Endothelial cell of umbilical vein (primary cell): ENCODE measurements at regions of chr17 and their contacts with region 1.

Region 1: GRCh38 chr17:7435221-7435675 is at the start of gene TMEM102:
- DNase-seq: peak; percentile 97
- H3K4me3 ChIP-seq: peak within 1 kb of the TSS; percentile 54 to 83 (median 83)
- H3K27ac ChIP-seq: peak within 1 kb of the TSS; percentile 32
- H3K4me1 ChIP-seq: peaks cover 21% of the 10 kb centered on the region
- H3K27me3 ChIP-seq: peaks cover 18 to 21% of the 10 kb centered on the region in 2 experiments
- CTCF ChIP-seq: no peak
- POLR2A ChIP-seq: no peak
- total RNA-seq, gene TMEM102: 6.1 and 6.5 TPM in 2 replicates

Region 2: GRCh38 chr17:7306911-7307686 is 128.1 kb before region 1 on chr17 and contains the start of gene EIF5A:
- CTCF ChIA-PET with region 1: no interaction called
- POLR2A ChIA-PET with region 1: no interaction called
- dilution Hi-C with region 1: no loop called
- intact Hi-C with region 1: loop called (anchors 1 kb)
- DNase-seq: peak; percentile 100
- H3K4me3 ChIP-seq: peak within 1 kb of the TSS; percentile 71 to 93 (median 87)
- H3K27ac ChIP-seq: peak within 1 kb of the TSS; percentile 83
- H3K4me1 ChIP-seq: peaks cover 12% of the 10 kb centered on the region
- H3K27me3 ChIP-seq: no peaks in the 10 kb centered on the region
- CTCF ChIP-seq: no peak
- POLR2A ChIP-seq: peak; percentile 83
- total RNA-seq, gene EIF5A: 847 and 859 TPM in 2 replicates

Region 3: GRCh38 chr17:7394452-7395191 is 40.6 kb before region 1 on chr17 and contains the start of gene PLSCR3:
- CTCF ChIA-PET with region 1: interaction called, 7 read pairs
- POLR2A ChIA-PET with region 1: no interaction called
- dilution Hi-C with region 1: no loop called
- intact Hi-C with region 1: loop called (anchors 2 kb)
- DNase-seq: peak; percentile 92
- H3K4me3 ChIP-seq: peak within 1 kb of the TSS; percentile 58 to 93 (median 92)
- H3K27ac ChIP-seq: peak within 1 kb of the TSS; percentile 45
- H3K4me1 ChIP-seq: peaks cover 16% of the 10 kb centered on the region
- H3K27me3 ChIP-seq: no peaks in the 10 kb centered on the region
- CTCF ChIP-seq: peak in 1 of 2 donors; percentile 55
- POLR2A ChIP-seq: peak; percentile 90
- total RNA-seq, gene PLSCR3: 54.5 and 59.9 TPM in 2 replicates

Region 4: GRCh38 chr17:7454980-7455379 is 19.7 kb after region 1 on chr17:
- CTCF ChIA-PET with region 1: interaction called, 12 read pairs
- POLR2A ChIA-PET with region 1: interaction called, 10 read pairs
- dilution Hi-C with region 1: no loop called
- intact Hi-C with region 1: loop called (anchors 2 kb)
- DNase-seq: no peak
- H3K4me3 ChIP-seq: no peak overlapping the region
- H3K27ac ChIP-seq: no peak overlapping the region
- H3K4me1 ChIP-seq: no peaks in the 10 kb centered on the region
- H3K27me3 ChIP-seq: no peaks in the 10 kb centered on the region
- CTCF ChIP-seq: no peak
- POLR2A ChIP-seq: no peak

Region 5: DNA sequence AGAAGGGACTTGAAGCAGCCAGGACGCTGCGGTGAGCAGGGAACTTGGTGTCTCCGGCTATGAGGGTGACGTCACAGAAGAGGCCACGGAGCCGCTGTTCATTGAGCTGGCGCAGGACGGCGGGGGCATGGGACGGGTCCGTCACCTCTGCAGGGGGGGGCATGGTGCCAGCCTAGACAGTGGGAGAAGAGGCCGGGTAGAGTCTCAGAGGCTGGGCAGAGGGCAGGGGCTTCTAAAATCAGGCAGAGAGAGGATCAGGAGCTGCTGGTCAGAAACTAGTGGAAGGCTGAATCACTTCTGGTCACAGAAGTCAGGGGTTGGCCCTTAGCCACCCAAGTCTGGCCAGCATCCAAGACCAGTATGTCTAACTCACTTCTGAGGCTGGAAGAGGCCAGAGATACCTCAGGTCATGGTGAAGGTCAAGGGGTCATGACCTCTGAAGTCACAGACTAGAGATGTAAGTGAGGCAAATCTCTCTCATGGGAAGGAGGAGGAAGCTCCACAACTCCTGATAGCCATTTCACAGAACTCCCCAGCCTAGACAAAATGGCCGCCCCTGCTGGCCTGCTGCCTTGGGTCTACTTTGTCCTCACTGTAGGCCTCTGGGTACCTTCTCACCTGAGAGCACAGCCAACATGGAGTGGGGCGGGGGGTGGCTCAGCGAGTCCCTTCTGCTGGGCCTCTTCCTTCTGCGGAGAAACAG is 31.5 kb after region 1 on chr17:
- CTCF ChIA-PET with region 1: interaction called, 11 read pairs
- POLR2A ChIA-PET with region 1: interaction called, 3 read pairs
- dilution Hi-C with region 1: no loop called
- intact Hi-C with region 1: no loop called
- DNase-seq: peak; percentile 53
- H3K4me3 ChIP-seq: no peak overlapping the region
- H3K27ac ChIP-seq: no peak overlapping the region
- H3K4me1 ChIP-seq: no peaks in the 10 kb centered on the region
- H3K27me3 ChIP-seq: no peaks in the 10 kb centered on the region
- CTCF ChIP-seq: no peak
- POLR2A ChIP-seq: no peak

Region 6: DNA sequence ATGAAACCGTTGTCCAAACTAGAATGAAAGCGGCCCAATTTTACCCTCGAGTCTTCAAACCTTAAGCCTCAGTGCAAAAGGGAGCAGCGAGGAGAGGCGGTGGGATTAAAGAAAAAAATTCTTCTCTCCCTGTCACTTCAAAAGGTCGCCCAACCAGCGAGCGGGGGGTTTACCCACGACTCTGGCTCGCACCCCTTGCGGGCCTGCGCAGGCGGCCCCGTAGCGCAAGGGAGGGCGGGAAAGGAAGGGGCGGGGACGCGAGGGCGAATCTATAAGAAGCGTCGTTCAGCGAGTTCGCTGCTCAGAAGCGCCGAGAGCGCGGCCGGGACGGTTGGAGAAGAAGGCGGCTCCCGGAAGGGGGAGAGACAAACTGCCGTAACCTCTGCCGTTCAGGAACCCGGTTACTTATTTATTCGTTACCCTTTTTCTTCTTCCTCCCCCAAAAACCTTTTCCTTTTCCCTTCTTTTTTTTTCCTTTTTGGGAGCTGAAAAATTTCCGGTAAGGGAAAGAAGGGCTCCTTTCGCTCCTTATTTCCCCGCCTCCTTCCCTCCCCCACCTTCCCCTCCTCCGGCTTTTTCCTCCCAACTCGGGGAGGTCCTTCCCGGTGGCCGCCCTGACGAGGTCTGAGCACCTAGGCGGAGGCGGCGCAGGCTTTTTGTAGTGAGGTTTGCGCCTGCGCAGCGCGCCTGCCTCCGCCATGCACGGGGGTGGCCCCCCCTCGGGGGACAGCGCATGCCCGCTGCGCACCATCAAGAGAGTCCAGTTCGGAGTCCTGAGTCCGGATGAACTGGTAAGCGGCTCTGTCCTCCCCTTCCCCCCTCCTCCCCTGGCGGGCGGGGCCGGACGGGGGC is 49.0 kb after region 1 on chr17 and contains the start of gene POLR2A:
- CTCF ChIA-PET with region 1: interaction called, 13 read pairs
- POLR2A ChIA-PET with region 1: interaction called, 8 read pairs
- dilution Hi-C with region 1: no loop called
- intact Hi-C with region 1: loop called (anchors 1 kb)
- DNase-seq: peak; percentile 99
- H3K4me3 ChIP-seq: peak within 1 kb of the TSS; percentile 45 to 88 (median 76)
- H3K27ac ChIP-seq: peak within 1 kb of the TSS; percentile 100
- H3K4me1 ChIP-seq: peaks cover 28% of the 10 kb centered on the region
- H3K27me3 ChIP-seq: no peaks in the 10 kb centered on the region
- CTCF ChIP-seq: no peak
- POLR2A ChIP-seq: peak; percentile 100
- total RNA-seq, gene POLR2A: 145 and 151 TPM in 2 replicates

Region 7: DNA sequence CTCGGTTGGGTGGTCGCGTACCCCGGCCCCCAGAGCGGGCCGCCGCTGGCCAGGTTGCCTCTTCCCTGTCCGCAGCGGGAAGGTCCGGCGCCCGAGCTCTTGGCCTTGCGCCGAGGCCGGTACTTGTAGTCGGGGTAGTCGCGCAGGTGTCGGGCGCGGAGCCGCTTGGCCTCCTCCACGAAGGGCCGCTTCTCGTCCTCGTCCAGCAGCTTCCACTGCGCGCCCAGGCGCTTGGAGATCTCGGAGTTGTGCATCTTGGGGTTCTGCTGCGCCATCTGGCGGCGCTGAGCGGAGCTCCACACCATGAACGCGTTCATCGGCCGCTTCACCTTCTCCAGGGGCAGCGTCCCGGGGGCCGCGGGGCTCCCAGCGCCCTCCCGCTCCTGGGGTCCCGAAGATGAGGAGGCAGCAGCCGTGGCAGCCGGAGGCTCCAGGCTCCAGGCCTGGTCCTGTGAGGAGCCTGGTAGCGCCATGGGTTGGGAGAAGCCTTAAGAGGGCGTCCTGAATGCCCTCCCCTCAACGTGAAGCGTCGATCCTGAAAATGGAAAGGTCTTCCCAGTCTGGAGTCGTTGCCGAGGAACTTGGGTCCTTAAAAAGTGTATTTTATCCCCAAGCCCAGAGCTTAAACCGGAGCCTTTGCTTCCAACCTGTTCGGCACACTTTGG is 154.1 kb after region 1 on chr17:
- CTCF ChIA-PET with region 1: interaction called, 12 read pairs
- POLR2A ChIA-PET with region 1: no interaction called
- dilution Hi-C with region 1: no loop called
- intact Hi-C with region 1: no loop called
- DNase-seq: peak; percentile 78
- H3K4me3 ChIP-seq: no peak overlapping the region
- H3K27ac ChIP-seq: no peak overlapping the region
- H3K4me1 ChIP-seq: peaks cover 16% of the 10 kb centered on the region
- H3K27me3 ChIP-seq: no peaks in the 10 kb centered on the region
- CTCF ChIP-seq: peak; percentile 94 to 95
- POLR2A ChIP-seq: no peak

Region 8: DNA sequence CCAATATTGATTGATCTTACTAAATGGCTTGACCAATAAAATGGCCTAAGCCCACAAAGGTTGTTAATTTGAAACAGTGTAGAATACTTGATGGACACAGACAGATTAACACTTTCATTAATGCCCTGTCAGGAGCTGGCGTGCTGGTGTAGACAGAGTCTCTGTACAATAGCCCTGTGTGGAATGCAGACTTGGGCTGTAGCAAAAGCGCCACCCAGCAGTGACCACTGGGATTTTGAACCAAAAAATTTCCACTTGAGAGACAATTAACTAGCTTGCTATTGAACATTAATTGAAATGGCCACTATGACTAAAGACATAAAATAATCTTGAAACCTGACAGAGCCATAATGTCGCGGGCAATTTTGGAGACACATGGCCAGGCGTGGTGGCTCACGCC is 547.4 kb after region 1 on chr17:
- CTCF ChIA-PET with region 1: no interaction called
- POLR2A ChIA-PET with region 1: no interaction called
- dilution Hi-C with region 1: no loop called
- intact Hi-C with region 1: no loop called
- DNase-seq: peak; percentile 33
- H3K4me3 ChIP-seq: no peak overlapping the region
- H3K27ac ChIP-seq: no peak overlapping the region
- H3K4me1 ChIP-seq: peaks cover 4% of the 10 kb centered on the region
- H3K27me3 ChIP-seq: no peaks in the 10 kb centered on the region
- CTCF ChIP-seq: peak in 1 of 2 donors; percentile 8
- POLR2A ChIP-seq: no peak